T-cell (primary cell): ENCODE measurements at regions of chr6 and their contacts with region 1.

Region 1: GRCh38 chr6:130282234-130282995 is 59.7 kb upstream of the SAMD3 start:
- DNase-seq: peak in 25 of 35 experiments; percentile 4 to 57 (median 21)
- ATAC-seq: peak; percentile 57 to 85 (median 76)
- H3K4me3 ChIP-seq: no peak overlapping the region
- H3K4me3 Mint-ChIP-seq: no peak overlapping the region
- H3K27ac ChIP-seq: no peak overlapping the region
- H3K27ac Mint-ChIP-seq: no peak overlapping the region
- H3K4me1 ChIP-seq: no peaks in the 10 kb centered on the region
- H3K4me1 Mint-ChIP-seq: peaks cover 8 to 16% (median 15%) of the 10 kb centered on the region in 3 donors
- H3K27me3 ChIP-seq: no peaks in the 10 kb centered on the region
- H3K27me3 Mint-ChIP-seq: no peaks in the 10 kb centered on the region

Region 2: GRCh38 chr6:129209355-129209754 is 1073.1 kb before region 1 on chr6:
- CTCF ChIA-PET with region 1: interaction called in 1 of 2 experiments, 10 read pairs
- POLR2A ChIA-PET with region 1: no interaction called
- DNase-seq: no peak
- ATAC-seq: no peak
- H3K4me3 ChIP-seq: no peak overlapping the region
- H3K4me3 Mint-ChIP-seq: no peak overlapping the region
- H3K27ac ChIP-seq: no peak overlapping the region
- H3K27ac Mint-ChIP-seq: no peak overlapping the region
- H3K4me1 ChIP-seq: no peaks in the 10 kb centered on the region
- H3K4me1 Mint-ChIP-seq: no peaks in the 10 kb centered on the region
- H3K27me3 ChIP-seq: no peaks in the 10 kb centered on the region
- H3K27me3 Mint-ChIP-seq: peaks cover 5 to 14% of the 10 kb centered on the region in 2 donors

Region 3: GRCh38 chr6:130037207-130037811 is 245.1 kb before region 1 on chr6:
- CTCF ChIA-PET with region 1: interaction called in 1 of 2 experiments, 12 read pairs
- POLR2A ChIA-PET with region 1: interaction called in 1 of 2 experiments, 4 read pairs
- DNase-seq: peak in 1 of 35 experiments; percentile 59
- ATAC-seq: peak in 2 of 4 experiments; percentile 43 to 52
- H3K4me3 ChIP-seq: no peak overlapping the region
- H3K4me3 Mint-ChIP-seq: no peak overlapping the region
- H3K27ac ChIP-seq: no peak overlapping the region
- H3K27ac Mint-ChIP-seq: no peak overlapping the region
- H3K4me1 ChIP-seq: peaks cover 0 to 8% of the 10 kb centered on the region in 2 experiments
- H3K4me1 Mint-ChIP-seq: peaks cover 71 to 78% (median 73%) of the 10 kb centered on the region in 3 donors
- H3K27me3 ChIP-seq: no peaks in the 10 kb centered on the region
- H3K27me3 Mint-ChIP-seq: no peaks in the 10 kb centered on the region

Region 4: DNA sequence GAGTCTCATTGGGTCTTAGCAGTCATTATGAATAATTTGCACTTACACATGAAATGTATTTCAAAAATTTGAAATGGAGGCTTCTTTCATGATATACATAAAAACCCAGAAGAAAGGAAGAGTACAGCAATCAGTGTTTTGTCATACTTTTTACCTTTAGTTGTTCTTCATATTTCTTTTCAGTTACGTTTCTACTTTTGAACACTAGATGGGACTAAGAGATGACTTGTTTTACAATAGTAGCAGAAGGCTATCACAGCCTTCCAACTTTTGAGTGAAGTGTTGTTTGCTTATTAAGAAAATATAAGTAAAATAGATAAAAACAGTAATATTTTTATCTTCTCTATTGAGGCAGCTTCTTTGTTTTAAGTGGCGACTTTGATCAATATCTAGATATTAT is 205.9 kb before region 1 on chr6:
- CTCF ChIA-PET with region 1: interaction called, 3 to 15 read pairs
- POLR2A ChIA-PET with region 1: interaction called in 1 of 2 experiments, 3 read pairs
- DNase-seq: peak in 1 of 35 experiments; percentile 33
- ATAC-seq: peak in 2 of 4 experiments; percentile 37 to 39
- H3K4me3 ChIP-seq: no peak overlapping the region
- H3K4me3 Mint-ChIP-seq: no peak overlapping the region
- H3K27ac ChIP-seq: no peak overlapping the region
- H3K27ac Mint-ChIP-seq: peak overlapping the region in 1 of 2 donors; percentile 17
- H3K4me1 ChIP-seq: no peaks in the 10 kb centered on the region
- H3K4me1 Mint-ChIP-seq: peaks cover 13 to 20% (median 19%) of the 10 kb centered on the region in 3 donors
- H3K27me3 ChIP-seq: no peaks in the 10 kb centered on the region
- H3K27me3 Mint-ChIP-seq: no peaks in the 10 kb centered on the region

Region 5: DNA sequence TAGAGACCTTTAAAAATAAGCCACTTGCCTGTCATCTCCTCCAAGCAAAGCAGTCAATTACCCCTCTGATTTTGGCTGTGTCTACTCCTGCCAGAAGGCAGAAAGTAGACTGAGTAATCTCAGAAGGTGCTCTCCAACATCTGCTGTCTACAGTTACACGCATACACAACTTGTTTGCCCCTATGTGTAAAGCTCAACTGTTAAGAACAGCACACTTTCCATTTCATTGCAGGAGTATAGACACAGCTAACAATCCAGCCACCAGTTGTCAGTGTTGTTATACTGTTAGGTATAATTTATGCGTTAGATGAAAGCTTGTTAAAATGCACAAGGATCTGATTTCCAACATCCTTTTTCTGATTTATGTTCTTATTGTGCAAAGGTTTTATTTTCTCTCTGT is 147.8 kb before region 1 on chr6:
- CTCF ChIA-PET with region 1: interaction called, 4 to 13 read pairs
- POLR2A ChIA-PET with region 1: no interaction called
- DNase-seq: peak in 1 of 35 experiments; percentile 43
- ATAC-seq: no peak
- H3K4me3 ChIP-seq: no peak overlapping the region
- H3K4me3 Mint-ChIP-seq: peak overlapping the region in 1 of 3 donors; percentile 64
- H3K27ac ChIP-seq: peak overlapping the region; percentile 91
- H3K27ac Mint-ChIP-seq: peak overlapping the region; percentile 91 to 95
- H3K4me1 ChIP-seq: peaks cover 47 to 50% of the 10 kb centered on the region in 2 experiments
- H3K4me1 Mint-ChIP-seq: peaks cover 92 to 99% (median 94%) of the 10 kb centered on the region in 3 donors
- H3K27me3 ChIP-seq: no peaks in the 10 kb centered on the region
- H3K27me3 Mint-ChIP-seq: no peaks in the 10 kb centered on the region

Region 6: DNA sequence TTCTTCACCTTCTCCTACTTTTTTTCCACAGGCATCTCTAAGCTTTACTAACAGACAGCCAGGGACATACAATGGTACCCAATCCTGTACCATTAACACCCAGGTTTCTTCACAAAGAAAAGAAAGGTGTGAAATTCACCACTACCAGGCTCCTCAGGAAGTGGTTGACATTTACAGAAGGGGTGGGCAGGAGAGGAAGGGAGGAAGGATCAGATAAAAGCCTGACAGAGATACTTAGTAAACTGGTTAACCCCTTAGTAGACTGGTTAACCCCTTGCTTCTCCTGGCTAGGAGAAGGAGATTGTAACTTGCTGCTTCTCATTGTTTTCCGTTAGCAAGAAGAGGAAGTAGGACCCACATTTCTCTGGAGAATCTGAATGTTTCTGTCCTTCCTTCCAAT is 66.9 kb before region 1 on chr6:
- CTCF ChIA-PET with region 1: interaction called, 6 to 11 read pairs
- POLR2A ChIA-PET with region 1: no interaction called
- DNase-seq: peak in 30 of 35 experiments; percentile 3 to 76 (median 40)
- ATAC-seq: peak; percentile 90 to 98 (median 96)
- H3K4me3 ChIP-seq: peak overlapping the region; percentile 45 to 80
- H3K4me3 Mint-ChIP-seq: peak overlapping the region; percentile 71 to 82 (median 75)
- H3K27ac ChIP-seq: peak overlapping the region; percentile 25
- H3K27ac Mint-ChIP-seq: peak overlapping the region; percentile 84
- H3K4me1 ChIP-seq: peaks cover 40 to 41% of the 10 kb centered on the region in 2 experiments
- H3K4me1 Mint-ChIP-seq: peaks cover 67 to 84% (median 75%) of the 10 kb centered on the region in 3 donors
- H3K27me3 ChIP-seq: no peaks in the 10 kb centered on the region
- H3K27me3 Mint-ChIP-seq: no peaks in the 10 kb centered on the region

Region 7: GRCh38 chr6:130298258-130298657 is 15.8 kb after region 1 on chr6:
- CTCF ChIA-PET with region 1: no interaction called
- POLR2A ChIA-PET with region 1: no interaction called
- DNase-seq: no peak
- ATAC-seq: no peak
- H3K4me3 ChIP-seq: no peak overlapping the region
- H3K4me3 Mint-ChIP-seq: no peak overlapping the region
- H3K27ac ChIP-seq: no peak overlapping the region
- H3K27ac Mint-ChIP-seq: no peak overlapping the region
- H3K4me1 ChIP-seq: no peaks in the 10 kb centered on the region
- H3K4me1 Mint-ChIP-seq: no peaks in the 10 kb centered on the region
- H3K27me3 ChIP-seq: peaks cover 0 to 7% of the 10 kb centered on the region in 2 experiments
- H3K27me3 Mint-ChIP-seq: peaks cover 2 to 4% of the 10 kb centered on the region in 2 donors